ENCODE measurements at regions of chr1 and their contacts with region 1.

Region 1: DNA sequence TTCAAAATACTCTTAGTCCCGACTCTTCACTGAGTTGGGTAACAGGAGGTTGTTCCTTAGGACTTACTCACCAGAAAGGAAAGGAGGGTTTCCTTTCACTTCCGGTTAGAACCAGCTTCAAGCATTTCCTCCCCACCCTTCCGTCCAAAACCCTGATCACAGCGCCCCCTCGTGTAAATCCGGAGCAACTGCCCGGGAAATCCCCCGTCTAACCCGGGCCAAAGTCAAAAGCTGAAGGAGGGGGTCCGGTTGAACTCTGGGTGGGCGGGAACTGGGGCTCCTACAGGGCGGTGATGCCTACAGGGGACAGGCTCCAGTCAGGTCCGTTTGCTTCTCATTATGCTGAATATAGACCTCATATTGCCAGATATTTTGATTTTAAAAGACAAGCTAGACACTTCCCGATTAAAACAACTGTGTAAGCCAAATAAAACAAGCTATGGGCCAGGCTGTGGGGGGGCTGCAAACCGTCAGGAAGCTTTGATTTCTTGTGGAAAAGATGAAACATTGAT is 15.0 kb upstream of the MTARC2 start:
- DNase-seq: peak; percentile 92
- H3K4me3 ChIP-seq: peak overlapping the region in 1 of 3 experiments; percentile 47
- H3K27ac ChIP-seq: peak overlapping the region; percentile 96
- H3K4me1 ChIP-seq: peaks cover 32% of the 10 kb centered on the region
- H3K27me3 ChIP-seq: no peaks in the 10 kb centered on the region
- CTCF ChIP-seq: peak; percentile 84 to 85
- POLR2A ChIP-seq: no peak

Region 2: DNA sequence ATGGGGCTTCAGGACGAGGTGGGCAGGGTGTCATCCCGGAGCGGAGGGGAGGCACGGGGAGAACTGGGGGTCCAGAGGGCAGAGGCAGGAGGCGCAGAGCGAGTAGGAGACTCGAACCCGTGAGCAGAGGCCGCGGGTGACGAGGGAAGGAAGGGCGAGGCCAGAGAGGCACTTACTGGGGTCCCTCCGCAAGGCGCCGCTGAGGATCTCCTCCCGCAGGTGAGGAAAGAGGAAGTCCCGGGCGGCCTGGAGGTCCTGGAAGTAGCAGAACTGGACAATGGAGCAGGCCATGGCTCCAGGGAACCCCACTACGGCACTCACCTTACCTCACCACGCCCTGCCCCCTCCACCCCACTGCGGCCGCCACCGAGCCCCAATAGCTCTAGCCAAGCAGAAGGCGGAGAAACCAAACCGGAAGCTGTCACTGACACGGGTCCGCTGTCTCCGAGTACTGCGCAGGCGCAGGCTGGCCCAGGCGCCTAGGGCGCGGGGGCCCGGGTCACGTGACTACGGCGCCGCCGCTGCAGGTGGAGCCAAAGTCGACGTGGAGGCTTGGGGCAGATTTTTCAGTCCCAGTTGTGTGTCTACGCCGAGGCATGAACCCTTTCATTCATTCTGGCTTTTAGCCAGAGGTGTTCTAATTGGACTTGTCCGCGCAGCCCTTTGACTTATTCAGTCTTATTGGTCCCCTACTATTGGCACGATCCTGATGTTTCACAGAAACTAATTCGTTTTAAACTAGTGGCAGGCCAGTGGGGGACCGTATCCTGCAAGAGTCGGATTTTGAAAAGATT is 460.9 kb before region 1 on chr1 and contains the start of gene RAB3GAP2:
- CTCF ChIA-PET with region 1: interaction called, 5 read pairs
- POLR2A ChIA-PET with region 1: no interaction called
- dilution Hi-C with region 1: no loop called
- intact Hi-C with region 1: loop called (anchors 2 kb)
- DNase-seq: peak; percentile 95
- H3K4me3 ChIP-seq: peak within 1 kb of the TSS; percentile 63 to 75 (median 63)
- H3K27ac ChIP-seq: peak within 1 kb of the TSS; percentile 72
- H3K4me1 ChIP-seq: peaks cover 14% of the 10 kb centered on the region
- H3K27me3 ChIP-seq: peaks cover 7 to 14% of the 10 kb centered on the region in 2 experiments
- CTCF ChIP-seq: no peak
- POLR2A ChIP-seq: peak; percentile 91
- total RNA-seq, gene RAB3GAP2: 37.0 and 37.4 TPM in 2 replicates

Region 3: DNA sequence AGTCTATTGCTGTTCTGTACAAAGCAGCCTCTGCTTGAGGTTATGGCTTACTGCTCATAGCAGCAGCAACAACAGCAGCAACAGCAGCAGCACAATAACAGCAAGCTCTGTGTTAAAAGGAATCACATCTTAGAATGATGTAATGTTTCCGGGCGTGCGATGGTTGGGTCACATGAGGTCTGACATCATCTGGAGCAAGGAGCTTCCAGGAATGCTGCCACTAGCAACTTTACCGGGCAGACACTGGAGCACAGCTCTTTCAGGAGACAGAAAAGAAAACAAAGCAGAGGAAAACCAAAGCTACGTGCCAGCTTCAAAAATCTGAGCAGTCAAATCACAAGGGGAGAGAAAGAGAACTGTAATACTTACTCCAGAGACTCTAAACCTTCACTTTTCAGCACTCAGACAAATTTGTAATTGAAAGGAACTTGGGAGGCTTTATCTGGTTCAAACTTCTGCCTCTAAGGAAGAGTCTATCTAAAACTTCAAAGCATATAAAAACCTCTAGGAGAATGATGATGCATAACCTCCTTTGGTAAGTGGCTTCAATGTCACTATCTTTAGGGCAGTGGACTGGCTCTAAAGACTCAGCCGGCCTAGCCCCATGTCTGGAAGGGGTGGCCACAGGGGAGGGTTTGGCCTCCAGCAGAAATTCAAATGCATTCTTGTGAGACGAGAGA is 432.6 kb before region 1 on chr1:
- CTCF ChIA-PET with region 1: interaction called, 37 read pairs
- POLR2A ChIA-PET with region 1: interaction called, 3 read pairs
- dilution Hi-C with region 1: no loop called
- intact Hi-C with region 1: loop called (anchors 1 kb)
- DNase-seq: peak; percentile 95
- H3K4me3 ChIP-seq: no peak overlapping the region
- H3K27ac ChIP-seq: peak overlapping the region; percentile 82
- H3K4me1 ChIP-seq: peaks cover 12% of the 10 kb centered on the region
- H3K27me3 ChIP-seq: peaks cover 3 to 5% of the 10 kb centered on the region in 2 experiments
- CTCF ChIP-seq: no peak
- POLR2A ChIP-seq: no peak

Region 4: DNA sequence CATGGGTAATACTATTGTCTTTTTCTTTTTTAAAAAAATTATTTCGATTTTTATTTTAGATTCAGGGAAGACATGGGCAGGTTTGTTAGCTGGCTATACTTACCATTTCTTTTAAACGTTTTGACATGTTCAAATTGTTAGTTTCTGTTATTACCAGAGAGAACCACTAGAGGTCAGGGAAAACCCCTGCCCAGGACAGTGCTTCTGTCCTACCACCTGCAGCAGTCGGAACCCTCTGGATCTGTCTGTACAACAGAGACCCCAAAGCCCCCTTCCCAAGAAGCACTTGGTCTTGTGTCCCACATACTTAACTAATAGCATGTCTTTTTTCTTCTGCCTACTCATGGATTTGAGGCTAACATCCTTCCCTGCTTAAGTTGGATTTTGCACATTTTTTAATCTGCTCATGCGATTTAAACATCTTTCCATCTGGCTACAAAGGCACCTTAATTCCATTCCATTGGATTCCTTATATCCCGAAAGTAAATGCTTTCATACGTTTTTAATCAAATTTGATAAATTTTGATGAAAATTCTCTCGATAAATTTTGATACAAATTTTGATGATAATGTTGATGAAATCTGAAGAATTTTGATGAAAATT is 53.0 kb before region 1 on chr1:
- CTCF ChIA-PET with region 1: interaction called, 22 read pairs
- POLR2A ChIA-PET with region 1: no interaction called
- dilution Hi-C with region 1: no loop called
- intact Hi-C with region 1: loop called (anchors 1 kb)
- DNase-seq: peak; percentile 70
- H3K4me3 ChIP-seq: no peak overlapping the region
- H3K27ac ChIP-seq: no peak overlapping the region
- H3K4me1 ChIP-seq: no peaks in the 10 kb centered on the region
- H3K27me3 ChIP-seq: no peaks in the 10 kb centered on the region
- CTCF ChIP-seq: peak; percentile 60 to 64
- POLR2A ChIP-seq: no peak

Region 5: GRCh38 chr1:220711056-220711809 is 21.9 kb before region 1 on chr1:
- CTCF ChIA-PET with region 1: interaction called, 12 read pairs
- POLR2A ChIA-PET with region 1: no interaction called
- dilution Hi-C with region 1: no loop called
- intact Hi-C with region 1: no loop called
- DNase-seq: no peak
- H3K4me3 ChIP-seq: no peak overlapping the region
- H3K27ac ChIP-seq: no peak overlapping the region
- H3K4me1 ChIP-seq: no peaks in the 10 kb centered on the region
- H3K27me3 ChIP-seq: no peaks in the 10 kb centered on the region
- CTCF ChIP-seq: no peak
- POLR2A ChIP-seq: no peak

Region 6: GRCh38 chr1:220962031-220962751 is 229.0 kb after region 1 on chr1:
- CTCF ChIA-PET with region 1: no interaction called
- POLR2A ChIA-PET with region 1: no interaction called
- dilution Hi-C with region 1: no loop called
- intact Hi-C with region 1: no loop called
- DNase-seq: no peak
- H3K4me3 ChIP-seq: no peak overlapping the region
- H3K27ac ChIP-seq: no peak overlapping the region
- H3K4me1 ChIP-seq: no peaks in the 10 kb centered on the region
- H3K27me3 ChIP-seq: no peaks in the 10 kb centered on the region
- CTCF ChIP-seq: no peak
- POLR2A ChIP-seq: no peak

Region 7: DNA sequence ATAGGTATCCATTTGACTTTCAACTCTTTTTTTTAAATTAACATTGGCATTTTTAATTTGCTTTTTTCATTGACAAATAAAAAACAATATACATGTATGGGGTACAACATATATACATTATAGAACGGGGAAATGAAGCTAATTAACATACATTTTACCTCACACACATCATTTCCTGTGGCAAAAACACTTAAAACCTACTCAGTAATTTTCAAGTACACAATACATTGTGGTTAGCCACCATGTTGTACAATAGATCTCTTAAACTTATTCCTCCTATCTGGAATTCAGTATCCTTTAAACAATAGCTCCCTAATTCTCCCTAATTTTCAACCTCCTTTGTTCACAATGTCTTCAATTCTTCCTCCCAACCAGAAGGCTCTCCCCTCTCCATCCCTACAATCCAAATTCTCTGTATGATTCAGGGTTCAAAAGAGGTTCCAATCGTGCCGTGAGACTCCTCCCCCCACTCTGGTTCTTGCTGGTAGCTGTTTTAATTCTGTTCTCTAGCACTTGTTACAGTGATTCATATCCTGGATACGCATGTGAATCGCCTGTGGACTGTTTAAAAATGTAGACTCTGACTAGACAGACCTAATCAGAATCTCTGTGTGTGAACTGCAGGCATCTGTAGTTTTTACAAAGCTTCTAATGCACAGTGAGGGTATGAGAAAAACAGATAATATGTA is 1096.3 kb after region 1 on chr1:
- CTCF ChIA-PET with region 1: no interaction called
- POLR2A ChIA-PET with region 1: no interaction called
- dilution Hi-C with region 1: no loop called
- intact Hi-C with region 1: loop called (anchors 5 kb)
- DNase-seq: peak; percentile 93
- H3K4me3 ChIP-seq: no peak overlapping the region
- H3K27ac ChIP-seq: peak overlapping the region; percentile 63
- H3K4me1 ChIP-seq: peaks cover 58% of the 10 kb centered on the region
- H3K27me3 ChIP-seq: no peaks in the 10 kb centered on the region
- CTCF ChIP-seq: no peak
- POLR2A ChIP-seq: no peak